ENCODE measurements at regions of chr2 and their contacts with region 1.

Region 1: GRCh38 chr2:61538200-61538919 is at the start of gene XPO1:
- DNase-seq: peak; percentile 100
- H3K4me3 ChIP-seq: peak within 1 kb of the TSS; percentile 84
- H3K27ac ChIP-seq: peak within 1 kb of the TSS; percentile 89
- H3K4me1 ChIP-seq: peaks cover 32% of the 10 kb centered on the region
- CTCF ChIP-seq: no peak
- total RNA-seq, gene XPO1: 164 and 177 TPM in 2 replicates

Region 2: GRCh38 chr2:61016808-61017555 is 521.4 kb before region 1 on chr2:
- CTCF ChIA-PET with region 1: no interaction called
- POLR2A ChIA-PET with region 1: no interaction called
- intact Hi-C with region 1: loop called (anchors 5 kb)
- DNase-seq: peak; percentile 85
- H3K4me3 ChIP-seq: peak overlapping the region; percentile 89
- H3K27ac ChIP-seq: peak overlapping the region; percentile 87
- H3K4me1 ChIP-seq: peaks cover 22% of the 10 kb centered on the region
- CTCF ChIP-seq: no peak

Region 3: GRCh38 chr2:61055557-61055956 is 482.8 kb before region 1 on chr2:
- CTCF ChIA-PET with region 1: no interaction called
- POLR2A ChIA-PET with region 1: no interaction called
- intact Hi-C with region 1: no loop called
- DNase-seq: no peak
- H3K4me3 ChIP-seq: no peak overlapping the region
- H3K27ac ChIP-seq: no peak overlapping the region
- H3K4me1 ChIP-seq: no peaks in the 10 kb centered on the region
- CTCF ChIP-seq: no peak

Region 4: GRCh38 chr2:61380056-61380881 is 158.1 kb before region 1 on chr2:
- CTCF ChIA-PET with region 1: no interaction called
- POLR2A ChIA-PET with region 1: interaction called, 14 read pairs
- intact Hi-C with region 1: no loop called
- DNase-seq: no peak
- H3K4me3 ChIP-seq: no peak overlapping the region
- H3K27ac ChIP-seq: no peak overlapping the region
- H3K4me1 ChIP-seq: no peaks in the 10 kb centered on the region
- CTCF ChIP-seq: no peak

Region 5: DNA sequence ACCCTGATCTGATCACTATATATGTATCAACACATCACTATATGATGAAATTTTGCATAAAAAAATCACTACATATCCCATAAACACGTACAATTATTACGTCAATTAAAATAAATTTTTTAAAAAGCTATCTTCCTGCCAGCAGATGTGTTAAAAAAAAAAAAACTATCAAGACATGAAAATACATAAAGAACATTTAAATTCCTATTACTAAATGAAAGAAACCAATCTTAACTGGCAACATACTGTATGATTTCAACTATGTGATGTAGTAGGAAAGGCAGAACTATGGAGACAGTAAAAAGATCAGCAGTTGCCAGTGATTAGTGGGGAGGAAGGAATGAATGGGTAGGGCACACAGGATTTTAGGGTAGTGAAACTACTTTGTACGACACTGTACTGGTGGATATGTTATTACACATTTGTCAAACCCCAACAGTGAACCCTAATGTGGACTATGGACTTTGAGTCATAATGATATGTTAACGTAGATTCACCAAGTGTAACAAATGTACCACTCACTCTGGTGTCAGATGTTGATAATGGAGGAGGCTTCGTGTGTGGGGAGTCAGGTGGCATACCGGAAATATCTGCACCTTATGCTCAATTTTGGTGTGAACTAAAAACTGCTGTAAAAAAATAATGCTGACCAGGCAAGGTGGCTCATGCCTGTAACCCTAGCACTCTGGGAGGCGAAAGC is 94.9 kb before region 1 on chr2:
- CTCF ChIA-PET with region 1: no interaction called
- POLR2A ChIA-PET with region 1: interaction called, 11 read pairs
- intact Hi-C with region 1: no loop called
- DNase-seq: peak; percentile 79
- H3K4me3 ChIP-seq: peak overlapping the region; percentile 63
- H3K27ac ChIP-seq: peak overlapping the region; percentile 94
- H3K4me1 ChIP-seq: peaks cover 99% of the 10 kb centered on the region
- CTCF ChIP-seq: no peak

Region 6: GRCh38 chr2:61604433-61604832 is 66.1 kb after region 1 on chr2:
- CTCF ChIA-PET with region 1: no interaction called
- POLR2A ChIA-PET with region 1: no interaction called
- intact Hi-C with region 1: no loop called
- DNase-seq: no peak
- H3K4me3 ChIP-seq: no peak overlapping the region
- H3K27ac ChIP-seq: no peak overlapping the region
- H3K4me1 ChIP-seq: no peaks in the 10 kb centered on the region
- CTCF ChIP-seq: no peak